ENCODE measurements at regions of chr1 and their contacts with region 1.

Region 1: GRCh38 chr1:111507411-111508201 is 4.2 kb upstream of the ADORA3 start:
- DNase-seq: peak in 9 of 10 donors; percentile 18 to 72 (median 35)
- ATAC-seq: peak; percentile 64 to 65
- H3K4me3 Mint-ChIP-seq: peak overlapping the region; percentile 62 to 90 (median 84)
- H3K27ac Mint-ChIP-seq: peak overlapping the region in 9 of 10 donors; percentile 79 to 98 (median 95)
- H3K4me1 Mint-ChIP-seq: peaks cover 33 to 59% (median 52%) of the 10 kb centered on the region in 4 donors
- H3K27me3 Mint-ChIP-seq: no peaks in the 10 kb centered on the region

Region 2: GRCh38 chr1:111471012-111471411 is 36.6 kb before region 1 on chr1:
- POLR2A ChIA-PET with region 1: interaction called, 34 read pairs
- DNase-seq: peak; percentile 26 to 87 (median 71)
- ATAC-seq: peak; percentile 94 to 97
- H3K4me3 Mint-ChIP-seq: no peak overlapping the region
- H3K27ac Mint-ChIP-seq: no peak overlapping the region
- H3K4me1 Mint-ChIP-seq: peaks cover 10 to 24% (median 17%) of the 10 kb centered on the region in 4 donors
- H3K27me3 Mint-ChIP-seq: no peaks in the 10 kb centered on the region

Region 3: GRCh38 chr1:111476761-111477309 is 30.8 kb before region 1 on chr1:
- POLR2A ChIA-PET with region 1: interaction called, 34 read pairs
- DNase-seq: peak in 9 of 10 donors; percentile 14 to 76 (median 42)
- ATAC-seq: peak; percentile 84 to 90
- H3K4me3 Mint-ChIP-seq: peak overlapping the region in 9 of 10 donors; percentile 71 to 95 (median 87)
- H3K27ac Mint-ChIP-seq: peak overlapping the region in 8 of 10 donors; percentile 89 to 98 (median 95)
- H3K4me1 Mint-ChIP-seq: peaks cover 28 to 75% (median 56%) of the 10 kb centered on the region in 4 donors
- H3K27me3 Mint-ChIP-seq: no peaks in the 10 kb centered on the region

Region 4: GRCh38 chr1:111497592-111497991 is 10.0 kb before region 1 on chr1:
- POLR2A ChIA-PET with region 1: interaction called, 10 read pairs
- DNase-seq: no peak
- ATAC-seq: no peak
- H3K4me3 Mint-ChIP-seq: no peak overlapping the region
- H3K27ac Mint-ChIP-seq: peak overlapping the region in 2 of 10 donors; percentile 2 to 43
- H3K4me1 Mint-ChIP-seq: peaks cover 4 to 23% (median 17%) of the 10 kb centered on the region in 4 donors
- H3K27me3 Mint-ChIP-seq: no peaks in the 10 kb centered on the region

Region 5: GRCh38 chr1:111592389-111593361 is 85.1 kb after region 1 on chr1:
- POLR2A ChIA-PET with region 1: interaction called, 13 read pairs
- DNase-seq: peak; percentile 55 to 94 (median 70)
- ATAC-seq: peak; percentile 81 to 91
- H3K4me3 Mint-ChIP-seq: peak overlapping the region; percentile 61 to 82 (median 68)
- H3K27ac Mint-ChIP-seq: peak overlapping the region; percentile 26 to 97 (median 90)
- H3K4me1 Mint-ChIP-seq: peaks cover 27 to 59% (median 56%) of the 10 kb centered on the region in 4 donors
- H3K27me3 Mint-ChIP-seq: no peaks in the 10 kb centered on the region

Region 6: DNA sequence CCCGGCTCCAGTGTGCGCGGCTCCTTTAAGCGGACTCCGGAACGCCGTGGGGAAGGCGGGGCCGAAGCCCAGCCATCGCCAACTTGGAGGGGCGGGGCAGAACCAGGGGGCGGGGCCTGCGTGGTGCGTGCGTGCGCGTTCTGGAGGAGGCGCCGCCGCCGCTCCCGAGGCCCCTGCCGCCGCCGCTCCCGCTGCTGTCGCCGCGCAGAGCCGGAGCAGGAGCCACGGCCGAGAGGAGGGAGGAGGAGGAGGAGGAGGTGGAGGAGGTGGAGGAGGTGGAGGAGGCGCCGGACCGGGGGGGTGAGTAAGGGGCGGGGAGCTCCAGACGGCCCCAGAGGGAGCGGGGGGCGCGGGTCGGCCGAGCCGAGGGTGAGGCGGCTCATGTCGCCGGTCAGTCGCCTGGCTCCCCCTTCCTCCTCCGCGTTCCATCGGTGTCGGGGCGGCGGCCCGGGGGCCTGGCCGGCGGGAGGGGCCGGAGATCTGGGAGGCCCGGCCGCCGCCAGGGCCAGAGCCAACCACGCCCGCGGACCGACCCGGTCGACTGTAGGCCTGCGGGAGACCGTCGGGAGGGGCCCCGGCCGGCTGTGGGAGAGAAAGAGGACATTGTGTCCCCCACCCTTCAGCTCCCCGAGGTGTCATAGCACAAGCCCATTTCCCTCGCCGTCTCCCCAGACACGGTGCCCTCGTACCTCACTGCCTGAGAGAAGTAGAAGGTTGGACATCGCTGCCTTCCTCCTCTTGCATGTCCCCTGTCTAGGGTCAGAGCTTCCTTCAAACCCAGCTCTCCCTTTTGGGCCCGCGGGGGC is 112.2 kb after region 1 on chr1 and contains the start of gene RAP1A:
- POLR2A ChIA-PET with region 1: interaction called, 33 read pairs
- DNase-seq: peak; percentile 81 to 98 (median 90)
- ATAC-seq: peak; percentile 73 to 80
- H3K4me3 Mint-ChIP-seq: peak within 1 kb of the TSS; percentile 92 to 99 (median 98)
- H3K27ac Mint-ChIP-seq: peak within 1 kb of the TSS; percentile 85 to 98 (median 94)
- H3K4me1 Mint-ChIP-seq: peaks cover 44 to 80% (median 73%) of the 10 kb centered on the region in 4 donors
- H3K27me3 Mint-ChIP-seq: no peaks in the 10 kb centered on the region
- polyA plus RNA-seq, gene RAP1A: 43.4 to 53.9 (median 50.0) TPM